ENCODE measurements at regions of chr19 and their contacts with region 1.

Region 1: GRCh38 chr19:45403781-45404556 is 900 bp downstream of the PPP1R13L start:
- DNase-seq: peak; percentile 48
- H3K4me3 ChIP-seq: peak overlapping the region; percentile 68
- H3K27ac ChIP-seq: no peak overlapping the region
- H3K4me1 ChIP-seq: peaks cover 10% of the 10 kb centered on the region
- H3K27me3 ChIP-seq: no peaks in the 10 kb centered on the region
- CTCF ChIP-seq: peak; percentile 52

Region 2: DNA sequence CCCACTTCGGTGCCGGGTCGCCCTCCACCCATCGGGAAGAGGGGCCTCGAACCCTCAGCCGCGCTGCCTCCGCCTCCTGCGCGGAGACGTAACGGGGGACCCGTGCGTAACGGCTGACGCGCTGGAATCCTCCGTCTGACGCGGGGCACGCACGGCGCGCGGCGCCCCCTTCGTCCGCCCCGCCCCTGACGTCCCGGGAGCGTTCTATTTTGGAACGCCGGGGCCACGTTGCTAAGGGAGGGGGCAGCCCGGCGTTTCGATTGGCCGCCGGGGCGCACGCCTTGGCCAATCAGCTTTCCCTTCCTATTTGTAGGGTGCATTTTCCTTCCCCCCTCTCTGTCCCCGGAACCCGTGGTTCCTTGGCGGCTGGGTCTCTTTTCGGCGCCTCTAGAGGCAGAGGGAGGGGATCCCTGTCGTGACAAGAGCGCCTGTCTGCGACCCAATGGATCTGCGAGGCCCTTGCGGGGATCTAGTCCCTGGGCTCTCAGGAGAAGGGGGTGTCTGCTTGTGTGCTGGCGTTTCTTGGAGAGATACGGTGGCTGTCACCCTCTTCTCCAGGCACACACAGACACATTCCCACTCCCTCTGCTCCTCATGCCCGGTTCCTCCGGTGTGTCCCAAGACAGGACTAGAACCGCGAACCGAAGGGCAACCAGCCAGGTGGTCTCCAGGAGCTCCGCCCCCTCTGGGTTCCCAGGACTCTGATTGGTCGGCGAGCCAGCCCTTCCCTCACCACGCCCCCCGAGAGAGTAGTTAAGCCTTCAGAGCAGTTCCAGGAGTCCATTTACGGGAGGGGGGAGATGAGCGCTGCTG is 65.4 kb after region 1 on chr19:
- CTCF ChIA-PET with region 1: interaction called, 3 read pairs
- POLR2A ChIA-PET with region 1: interaction called, 17 read pairs
- intact Hi-C with region 1: no loop called
- DNase-seq: peak; percentile 98
- H3K4me3 ChIP-seq: peak overlapping the region; percentile 63
- H3K27ac ChIP-seq: peak overlapping the region; percentile 91
- H3K4me1 ChIP-seq: no peaks in the 10 kb centered on the region
- H3K27me3 ChIP-seq: no peaks in the 10 kb centered on the region
- CTCF ChIP-seq: no peak

Region 3: GRCh38 chr19:45657520-45658167 is 253.7 kb after region 1 on chr19:
- CTCF ChIA-PET with region 1: no interaction called
- POLR2A ChIA-PET with region 1: interaction called, 18 read pairs
- intact Hi-C with region 1: no loop called
- DNase-seq: no peak
- H3K4me3 ChIP-seq: no peak overlapping the region
- H3K27ac ChIP-seq: no peak overlapping the region
- H3K4me1 ChIP-seq: peaks cover 5% of the 10 kb centered on the region
- H3K27me3 ChIP-seq: no peaks in the 10 kb centered on the region
- CTCF ChIP-seq: no peak